ENCODE measurements at regions of chr2 and their contacts with region 1.

Region 1: GRCh38 chr2:179340668-179341067 is 76.0 kb upstream of the SESTD1 start:
- DNase-seq: no peak
- H3K4me3 ChIP-seq: no peak overlapping the region
- H3K27ac ChIP-seq: peak overlapping the region; percentile 36 to 81 (median 56)
- H3K4me1 ChIP-seq: peaks cover 14 to 77% (median 57%) of the 10 kb centered on the region in 4 donors
- H3K27me3 ChIP-seq: no peaks in the 10 kb centered on the region
- CTCF ChIP-seq: peak in 2 of 3 experiments; percentile 20 to 36
- EP300 ChIP-seq: no peak
- POLR2A ChIP-seq: no peak

Region 2: DNA sequence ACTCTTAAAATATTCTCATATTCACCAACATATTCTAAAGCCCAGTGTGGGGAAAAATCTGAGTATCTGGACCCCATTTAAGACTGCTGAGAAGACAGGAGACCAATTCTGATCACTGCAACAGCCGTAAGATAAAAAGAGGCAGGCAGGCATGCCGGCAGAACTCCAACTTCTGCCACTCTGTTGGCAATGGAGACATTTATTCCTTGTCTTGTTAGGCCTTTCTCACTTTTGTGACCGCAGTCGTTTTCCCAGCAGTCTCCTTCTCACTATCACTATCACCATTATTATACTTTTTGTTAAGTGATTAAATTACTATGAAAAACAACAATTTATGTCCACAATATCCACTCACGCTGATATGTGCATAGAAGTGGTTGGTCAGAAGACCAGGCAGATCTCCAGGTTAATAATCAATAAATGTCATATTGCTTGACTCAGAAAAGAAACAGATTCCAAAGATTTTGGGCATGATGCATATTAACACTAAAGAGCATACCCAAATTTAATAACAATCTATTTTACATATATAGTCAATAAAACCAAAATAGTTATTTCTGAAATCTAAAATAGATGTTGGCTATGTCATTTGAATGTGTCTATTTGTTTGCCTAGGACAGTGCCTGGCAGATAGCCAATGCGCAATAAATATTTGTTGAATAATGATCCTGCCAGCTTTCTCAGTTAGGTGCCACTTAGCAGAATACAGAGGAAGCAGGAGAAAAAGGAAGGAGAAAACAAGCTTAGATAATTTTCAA is 114.3 kb before region 1 on chr2:
- intact Hi-C with region 1: loop called (anchors 10 kb)
- DNase-seq: no peak
- H3K4me3 ChIP-seq: no peak overlapping the region
- H3K27ac ChIP-seq: no peak overlapping the region
- H3K4me1 ChIP-seq: peaks cover 15 to 48% (median 43%) of the 10 kb centered on the region in 4 donors
- H3K27me3 ChIP-seq: no peaks in the 10 kb centered on the region
- CTCF ChIP-seq: no peak
- EP300 ChIP-seq: no peak
- POLR2A ChIP-seq: no peak

Region 3: DNA sequence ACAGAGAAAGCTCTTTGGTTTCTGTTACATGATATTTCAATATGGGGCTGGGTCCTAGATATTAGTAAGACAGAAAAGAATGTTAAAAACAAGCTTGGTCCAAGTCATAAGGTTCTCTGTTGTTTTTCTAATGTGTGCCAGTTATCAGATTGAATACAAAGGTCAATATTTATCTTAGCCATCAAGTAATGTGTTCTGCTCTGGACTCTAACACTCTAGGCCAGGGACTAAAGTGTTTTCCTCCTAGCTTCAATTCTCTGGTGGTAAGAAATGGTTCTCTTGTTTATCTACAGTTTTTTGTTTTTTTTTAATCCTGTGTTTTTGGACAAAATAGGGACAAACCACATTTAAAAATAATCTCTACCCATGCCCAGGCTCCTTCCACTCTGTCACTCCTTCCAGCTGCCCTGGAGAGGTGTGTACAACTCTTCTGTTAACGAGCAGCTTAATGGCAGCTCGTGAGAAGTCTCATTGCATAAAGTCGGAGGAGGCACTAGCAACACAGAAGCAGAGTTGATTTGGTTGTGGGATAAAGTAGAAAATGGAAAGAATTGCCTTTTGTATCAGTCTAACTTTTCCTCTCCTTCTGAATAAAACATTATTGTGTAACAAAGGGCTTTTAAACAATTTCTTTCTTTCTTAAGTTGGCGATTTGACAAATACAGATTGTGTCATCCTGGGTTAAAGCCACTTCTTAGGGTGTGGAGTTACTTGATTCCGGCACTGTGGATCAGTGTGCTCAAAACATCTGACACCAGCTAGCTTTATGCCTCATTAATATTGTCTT is 68.1 kb before region 1 on chr2:
- intact Hi-C with region 1: loop called (anchors 5 kb)
- DNase-seq: no peak
- H3K4me3 ChIP-seq: no peak overlapping the region
- H3K27ac ChIP-seq: peak overlapping the region; percentile 56 to 69 (median 66)
- H3K4me1 ChIP-seq: peaks cover 9 to 47% (median 37%) of the 10 kb centered on the region in 4 donors
- H3K27me3 ChIP-seq: no peaks in the 10 kb centered on the region
- CTCF ChIP-seq: no peak
- EP300 ChIP-seq: no peak
- POLR2A ChIP-seq: no peak

Region 4: GRCh38 chr2:179562330-179562885 is 221.7 kb after region 1 on chr2:
- intact Hi-C with region 1: no loop called
- DNase-seq: no peak
- H3K4me3 ChIP-seq: no peak overlapping the region
- H3K27ac ChIP-seq: no peak overlapping the region
- H3K4me1 ChIP-seq: no peaks in the 10 kb centered on the region
- H3K27me3 ChIP-seq: no peaks in the 10 kb centered on the region
- CTCF ChIP-seq: no peak
- EP300 ChIP-seq: no peak
- POLR2A ChIP-seq: no peak

Measured in esophagus muscularis mucosa (tissue), 4 donors.